Lower leg skin (tissue), 4 donors: ENCODE measurements at regions of chr9 and their contacts with region 1.

Region 1: DNA sequence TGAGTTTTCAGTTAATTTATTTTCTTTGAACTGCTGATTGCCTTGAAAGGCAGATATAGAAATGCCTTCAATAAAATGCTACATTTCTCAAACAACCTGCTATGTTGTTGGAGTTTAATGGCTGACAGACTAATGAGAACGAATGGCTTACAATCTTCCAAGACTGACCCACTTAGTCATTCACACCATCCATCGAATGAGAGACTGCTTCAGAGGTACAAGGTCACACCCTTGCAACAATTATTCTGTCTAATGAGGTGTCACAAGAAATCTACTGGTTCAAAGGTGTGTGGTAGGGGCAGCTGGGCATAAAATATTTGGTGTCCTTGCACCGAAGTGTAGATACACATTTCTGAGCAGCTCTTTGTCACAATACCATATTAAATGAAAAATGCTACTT is 18.3 kb downstream of the PTPRD start:
- DNase-seq: no peak
- H3K4me3 ChIP-seq: no peak overlapping the region
- CTCF ChIP-seq: no peak
- POLR2A ChIP-seq: no peak

Region 2: DNA sequence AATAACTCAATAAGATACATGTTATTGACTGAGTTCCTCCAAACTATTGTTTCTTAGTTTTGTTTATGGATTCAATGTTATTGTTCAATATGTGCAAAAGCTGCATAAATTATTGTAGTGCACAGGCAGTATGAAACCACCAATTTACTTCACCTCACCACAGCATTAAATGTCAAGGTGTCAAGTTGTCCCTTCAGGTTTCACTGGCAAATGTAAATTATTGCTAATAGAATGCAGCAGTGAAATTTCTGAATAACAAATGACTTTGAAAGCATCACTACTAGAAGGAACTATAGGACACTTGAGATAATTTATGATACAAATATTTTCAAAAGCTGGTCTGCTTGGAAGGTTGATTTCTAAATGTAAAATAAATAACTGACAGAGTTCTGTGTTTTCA is 134.7 kb after region 1 on chr9:
- intact Hi-C with region 1: loop called (anchors 5 kb)
- DNase-seq: no peak
- H3K4me3 ChIP-seq: no peak overlapping the region
- CTCF ChIP-seq: no peak
- POLR2A ChIP-seq: no peak